ENCODE measurements at regions of chr11 and their contacts with region 1.

Region 1: GRCh38 chr11:72413914-72414628 is 20.3 kb downstream of the CLPB start:
- DNase-seq: peak; percentile 77 to 83 (median 82)
- H3K4me3 ChIP-seq: no peak overlapping the region
- H3K4me3 Mint-ChIP-seq: no peak overlapping the region
- H3K27ac ChIP-seq: peak overlapping the region in 1 of 2 donors; percentile 34
- H3K27ac Mint-ChIP-seq: peak overlapping the region in 4 of 7 donors; percentile 16 to 85 (median 63)
- H3K4me1 ChIP-seq: peaks cover 25 to 35% of the 10 kb centered on the region in 2 donors
- H3K4me1 Mint-ChIP-seq: peaks cover 47% of the 10 kb centered on the region
- H3K27me3 ChIP-seq: no peaks in the 10 kb centered on the region
- H3K27me3 Mint-ChIP-seq: no peaks in the 10 kb centered on the region
- CTCF ChIP-seq: peak; percentile 90

Region 2: DNA sequence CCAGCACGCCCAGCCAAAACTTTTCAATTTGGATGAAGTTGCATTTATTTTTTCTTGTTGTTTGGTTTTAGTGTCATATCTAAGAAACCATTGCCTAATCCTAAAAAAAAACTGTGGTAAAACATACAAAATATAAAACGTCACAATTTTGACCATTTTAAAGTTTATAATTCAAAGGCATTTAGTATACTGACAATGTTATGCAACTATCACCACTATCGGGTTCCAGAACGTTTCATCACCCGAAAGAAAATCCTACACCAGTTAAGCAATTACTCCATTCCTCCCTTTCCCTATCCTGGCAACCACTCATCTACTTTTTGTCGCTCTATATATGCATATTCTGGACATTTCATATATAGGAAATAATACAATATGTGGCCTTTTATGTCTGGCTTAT is 139.6 kb before region 1 on chr11:
- intact Hi-C with region 1: loop called in 1 of 2 experiments (anchors 1 kb)
- DNase-seq: peak in 2 of 3 donors; percentile 27 to 32
- H3K4me3 ChIP-seq: no peak overlapping the region
- H3K4me3 Mint-ChIP-seq: no peak overlapping the region
- H3K27ac ChIP-seq: no peak overlapping the region
- H3K27ac Mint-ChIP-seq: peak overlapping the region in 6 of 7 donors; percentile 69 to 94 (median 86)
- H3K4me1 ChIP-seq: peaks cover 25 to 41% of the 10 kb centered on the region in 2 donors
- H3K4me1 Mint-ChIP-seq: peaks cover 39% of the 10 kb centered on the region
- H3K27me3 ChIP-seq: peaks cover 0 to 3% of the 10 kb centered on the region in 2 donors
- H3K27me3 Mint-ChIP-seq: peaks cover 5 to 7% (median 6%) of the 10 kb centered on the region in 3 donors
- CTCF ChIP-seq: no peak

Region 3: GRCh38 chr11:72349616-72350218 is 64.4 kb before region 1 on chr11:
- intact Hi-C with region 1: loop called in 1 of 2 experiments (anchors 10 kb)
- DNase-seq: peak in 2 of 3 donors; percentile 13 to 16
- H3K4me3 ChIP-seq: no peak overlapping the region
- H3K4me3 Mint-ChIP-seq: no peak overlapping the region
- H3K27ac ChIP-seq: no peak overlapping the region
- H3K27ac Mint-ChIP-seq: peak overlapping the region in 2 of 7 donors; percentile 32 to 76
- H3K4me1 ChIP-seq: peaks cover 31 to 34% of the 10 kb centered on the region in 2 donors
- H3K4me1 Mint-ChIP-seq: peaks cover 34% of the 10 kb centered on the region
- H3K27me3 ChIP-seq: no peaks in the 10 kb centered on the region
- H3K27me3 Mint-ChIP-seq: no peaks in the 10 kb centered on the region
- CTCF ChIP-seq: no peak

Region 4: GRCh38 chr11:72378704-72379384 is 35.2 kb before region 1 on chr11:
- intact Hi-C with region 1: no loop called
- DNase-seq: no peak
- H3K4me3 ChIP-seq: no peak overlapping the region
- H3K4me3 Mint-ChIP-seq: no peak overlapping the region
- H3K27ac ChIP-seq: no peak overlapping the region
- H3K27ac Mint-ChIP-seq: no peak overlapping the region
- H3K4me1 ChIP-seq: no peaks in the 10 kb centered on the region
- H3K4me1 Mint-ChIP-seq: peaks cover 3% of the 10 kb centered on the region
- H3K27me3 ChIP-seq: no peaks in the 10 kb centered on the region
- H3K27me3 Mint-ChIP-seq: no peaks in the 10 kb centered on the region
- CTCF ChIP-seq: no peak

Region 5: GRCh38 chr11:72430741-72431570 is 16.9 kb after region 1 on chr11:
- intact Hi-C with region 1: loop called in 1 of 2 experiments (anchors 2 kb)
- DNase-seq: peak; percentile 46 to 63 (median 63)
- H3K4me3 ChIP-seq: peak overlapping the region in 1 of 3 experiments; percentile 55
- H3K4me3 Mint-ChIP-seq: peak overlapping the region; percentile 62 to 91
- H3K27ac ChIP-seq: peak overlapping the region in 1 of 2 donors; percentile 80
- H3K27ac Mint-ChIP-seq: peak overlapping the region; percentile 74 to 92 (median 82)
- H3K4me1 ChIP-seq: peaks cover 57 to 59% of the 10 kb centered on the region in 2 donors
- H3K4me1 Mint-ChIP-seq: peaks cover 59% of the 10 kb centered on the region
- H3K27me3 ChIP-seq: no peaks in the 10 kb centered on the region
- H3K27me3 Mint-ChIP-seq: peaks cover 0 to 1% (median 0%) of the 10 kb centered on the region in 3 donors
- CTCF ChIP-seq: peak; percentile 90